Body of pancreas (tissue), 4 donors: ENCODE measurements at regions of chr15 and their contacts with region 1.

Region 1: GRCh38 chr15:60585743-60586708 is 107.1 kb upstream of the ICE2 start:
- DNase-seq: peak; percentile 69 to 79 (median 72)
- ATAC-seq: peak; percentile 77
- H3K4me3 ChIP-seq: no peak overlapping the region
- H3K27ac ChIP-seq: peak overlapping the region in 1 of 4 donors; percentile 12
- H3K4me1 ChIP-seq: peaks cover 58% of the 10 kb centered on the region
- H3K27me3 ChIP-seq: no peaks in the 10 kb centered on the region
- CTCF ChIP-seq: peak; percentile 54 to 95 (median 90)
- POLR2A ChIP-seq: no peak

Region 2: DNA sequence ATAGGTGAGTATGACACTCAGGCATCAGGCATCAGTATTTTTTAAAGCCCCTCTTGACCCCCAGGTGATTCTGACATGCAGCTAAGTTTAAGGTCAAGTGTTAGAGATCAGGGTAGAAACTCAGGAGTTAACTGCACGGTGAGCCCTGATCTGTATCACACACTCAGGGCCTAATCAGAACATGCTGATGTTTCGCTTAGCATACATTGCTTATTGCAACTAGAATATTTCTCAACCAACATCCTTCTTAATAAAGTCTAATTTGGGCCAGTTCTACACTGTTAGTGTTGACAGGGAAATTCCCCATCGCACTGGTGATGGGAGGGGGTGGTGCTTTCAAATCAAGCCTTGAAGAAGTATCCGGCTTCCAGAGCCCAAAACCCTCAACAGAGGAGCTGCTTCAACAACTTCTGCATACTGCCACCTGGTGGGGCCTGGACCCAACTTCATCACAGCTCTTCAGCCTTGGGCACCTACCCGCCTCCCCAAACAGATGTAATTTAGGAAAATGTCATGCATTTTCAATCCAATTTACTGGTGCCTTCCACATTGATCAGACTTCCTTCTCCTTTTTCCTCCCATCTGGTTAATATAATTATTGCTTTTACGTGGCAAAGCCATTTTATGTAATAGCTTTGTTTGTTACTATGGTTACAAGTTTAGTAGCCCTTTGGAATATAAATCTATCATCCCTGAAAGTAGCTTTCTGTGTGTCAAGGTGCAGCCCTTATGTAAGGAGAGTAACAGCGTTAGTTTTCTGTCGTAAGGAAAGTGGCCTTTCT is 330.8 kb after region 1 on chr15:
- intact Hi-C with region 1: loop called (anchors 10 kb)
- DNase-seq: peak; percentile 88 to 92 (median 90)
- ATAC-seq: peak; percentile 74
- H3K4me3 ChIP-seq: no peak overlapping the region
- H3K27ac ChIP-seq: peak overlapping the region; percentile 70 to 90 (median 85)
- H3K4me1 ChIP-seq: peaks cover 74% of the 10 kb centered on the region
- H3K27me3 ChIP-seq: no peaks in the 10 kb centered on the region
- CTCF ChIP-seq: peak; percentile 64 to 92 (median 80)
- POLR2A ChIP-seq: no peak